ENCODE measurements at regions of chr3 and their contacts with region 1.

Region 1: DNA sequence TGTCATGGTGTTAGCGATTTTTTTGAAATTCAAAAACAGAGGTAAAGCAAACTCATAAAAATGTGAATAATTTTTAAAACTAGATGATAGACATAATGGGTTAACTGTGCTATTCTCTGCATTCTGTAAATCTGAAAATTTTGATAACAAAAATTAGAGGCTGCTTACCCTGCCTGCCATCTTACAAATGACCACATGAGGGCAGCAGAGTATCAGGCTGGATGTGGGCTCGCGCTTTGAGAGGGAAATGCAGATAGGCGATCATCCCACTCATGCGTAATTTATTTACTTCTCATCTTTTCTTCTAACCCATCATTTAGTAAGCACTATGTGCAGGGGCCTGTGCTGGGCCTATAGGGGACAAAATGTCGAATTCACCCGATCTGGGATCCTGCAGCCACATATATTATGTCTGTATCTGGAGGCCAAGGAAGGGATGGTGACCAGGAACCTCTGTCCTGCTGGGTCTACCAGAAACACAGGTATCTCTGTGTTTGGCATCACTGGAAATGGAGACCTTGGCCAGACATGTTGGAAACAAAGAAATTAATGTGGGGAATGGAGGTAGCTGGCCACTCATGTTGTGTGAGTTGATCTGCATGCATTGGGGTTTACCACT is 7.8 kb upstream of the RAD18 start:
- DNase-seq: peak in 1 of 2 donors; percentile 69
- H3K4me3 ChIP-seq: no peak overlapping the region
- CTCF ChIP-seq: peak in 1 of 3 donors; percentile 92
- POLR2A ChIP-seq: no peak

Region 2: DNA sequence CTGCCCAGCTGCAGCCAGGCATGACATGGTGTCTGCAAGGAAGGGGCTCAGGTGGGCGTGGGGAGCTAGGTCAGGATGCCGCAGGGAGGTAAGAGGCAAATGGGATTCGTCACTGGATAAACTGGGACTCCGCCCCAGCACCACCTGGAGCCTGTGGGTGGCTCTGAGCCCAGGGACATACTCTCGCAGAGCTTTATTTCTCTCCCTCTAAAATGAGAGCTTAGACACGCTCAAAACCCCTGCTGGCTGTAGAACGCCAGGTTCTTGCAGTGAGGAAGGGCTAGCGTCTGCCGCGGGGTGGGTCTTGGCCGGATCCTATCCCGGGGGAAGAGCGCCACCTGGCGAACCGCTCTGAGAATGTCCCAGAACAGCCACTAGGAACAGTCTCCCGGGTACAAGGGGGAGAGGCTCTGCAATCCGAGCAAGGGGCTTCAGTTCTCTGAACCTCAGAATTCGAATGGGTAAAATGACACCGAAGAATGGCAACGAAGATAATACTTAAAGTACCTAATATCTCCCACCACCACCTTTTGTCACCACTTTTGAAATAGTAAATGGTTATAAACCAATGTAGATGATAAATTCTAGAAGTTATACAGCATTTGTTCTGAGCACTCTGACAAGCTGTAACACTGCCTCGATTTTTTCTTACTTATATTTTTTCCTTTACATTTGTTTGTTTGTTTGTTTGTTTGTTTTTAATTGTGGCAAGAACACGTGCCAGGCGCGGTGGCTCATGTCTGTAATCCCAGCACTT is 331.5 kb after region 1 on chr3:
- intact Hi-C with region 1: loop called (anchors 5 kb)
- DNase-seq: peak; percentile 54 to 95
- H3K4me3 ChIP-seq: no peak overlapping the region
- CTCF ChIP-seq: peak in 1 of 3 donors; percentile 68
- POLR2A ChIP-seq: no peak